ENCODE measurements at regions of chr13 and their contacts with region 1.

Region 1: GRCh38 chr13:19910336-19911072 is 47.1 kb upstream of the ZMYM5 start:
- DNase-seq: no peak
- ATAC-seq: no peak
- H3K4me3 ChIP-seq: no peak overlapping the region
- H3K27ac ChIP-seq: no peak overlapping the region
- H3K4me1 ChIP-seq: no peaks in the 10 kb centered on the region
- H3K27me3 ChIP-seq: no peaks in the 10 kb centered on the region
- CTCF ChIP-seq: no peak

Region 2: DNA sequence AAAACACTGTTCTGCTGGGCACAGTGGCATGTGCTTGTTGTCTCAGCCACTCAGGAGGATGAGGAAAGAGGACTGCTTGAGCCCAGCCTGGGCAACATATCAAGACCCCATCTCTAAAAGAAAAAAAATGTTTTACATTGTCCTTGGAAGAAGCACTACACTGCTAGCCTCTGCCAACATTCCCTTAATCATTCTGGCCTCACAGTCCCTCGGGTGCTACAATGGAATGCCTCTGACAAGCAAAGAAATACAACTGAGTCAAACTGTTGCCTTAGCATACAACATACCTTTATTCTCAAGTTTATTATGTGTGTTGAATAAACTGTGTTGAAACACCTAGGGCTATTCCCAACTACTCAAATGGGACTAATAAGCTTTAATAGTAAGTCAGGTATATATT is 183.9 kb before region 1 on chr13:
- CTCF ChIA-PET with region 1: no interaction called
- POLR2A ChIA-PET with region 1: interaction called, 15 read pairs
- in situ Hi-C with region 1: no loop called
- intact Hi-C with region 1: no loop called
- DNase-seq: no peak
- ATAC-seq: no peak
- H3K4me3 ChIP-seq: no peak overlapping the region
- H3K27ac ChIP-seq: no peak overlapping the region
- H3K4me1 ChIP-seq: no peaks in the 10 kb centered on the region
- H3K27me3 ChIP-seq: no peaks in the 10 kb centered on the region
- CTCF ChIP-seq: no peak

Region 3: DNA sequence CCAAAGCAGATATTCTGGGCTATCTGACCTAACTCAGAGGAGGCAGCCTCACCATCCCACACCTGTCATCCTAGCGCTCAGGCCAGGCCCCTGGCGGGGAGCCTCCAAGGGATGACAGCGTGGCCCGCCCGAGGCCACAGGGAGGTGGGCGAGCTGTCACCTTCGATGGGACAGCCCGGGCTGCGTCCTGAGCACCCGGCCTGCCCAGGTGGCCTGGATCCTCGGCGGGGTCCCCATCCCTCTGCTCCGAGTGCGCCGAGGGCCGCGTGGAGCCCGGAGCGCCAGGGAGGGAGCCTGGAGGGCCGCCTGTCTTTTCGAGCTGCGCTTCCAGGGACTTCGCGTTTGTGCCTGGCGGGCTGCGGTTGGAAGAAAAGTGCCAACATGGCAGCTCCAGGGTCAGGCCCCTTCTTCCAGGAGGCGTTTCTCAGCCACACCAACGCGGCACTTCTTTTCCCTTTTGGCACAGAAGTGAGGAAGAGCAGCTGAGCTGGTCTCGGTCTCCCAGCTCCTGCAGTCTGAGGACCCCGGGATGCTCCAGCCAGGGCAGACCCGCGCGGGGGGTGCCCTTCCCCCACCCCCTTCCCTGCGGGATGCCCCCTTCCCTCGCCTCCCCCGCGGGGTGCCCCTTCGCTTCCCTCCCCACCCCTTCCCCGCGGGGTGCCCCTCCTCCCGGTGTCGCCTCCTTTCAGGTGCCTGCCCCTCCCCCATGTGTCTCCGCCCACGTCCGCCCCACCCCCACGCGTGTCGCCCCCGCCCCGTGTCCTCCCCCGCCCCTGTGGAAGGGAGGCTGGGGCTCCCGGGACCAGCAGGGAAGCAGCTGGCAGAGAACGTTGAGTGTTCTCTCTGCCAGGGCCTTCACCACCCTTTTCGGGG is 208.0 kb after region 1 on chr13:
- CTCF ChIA-PET with region 1: interaction called, 12 read pairs
- POLR2A ChIA-PET with region 1: no interaction called
- in situ Hi-C with region 1: no loop called
- intact Hi-C with region 1: no loop called
- DNase-seq: no peak
- ATAC-seq: peak; percentile 60
- H3K4me3 ChIP-seq: peak overlapping the region; percentile 49 to 68
- H3K27ac ChIP-seq: peak overlapping the region; percentile 84
- H3K4me1 ChIP-seq: peaks cover 10% of the 10 kb centered on the region
- H3K27me3 ChIP-seq: no peaks in the 10 kb centered on the region
- CTCF ChIP-seq: no peak

Measured in Panc1 (cell line).